ENCODE measurements at regions of chr13 and their contacts with region 1.

Region 1: DNA sequence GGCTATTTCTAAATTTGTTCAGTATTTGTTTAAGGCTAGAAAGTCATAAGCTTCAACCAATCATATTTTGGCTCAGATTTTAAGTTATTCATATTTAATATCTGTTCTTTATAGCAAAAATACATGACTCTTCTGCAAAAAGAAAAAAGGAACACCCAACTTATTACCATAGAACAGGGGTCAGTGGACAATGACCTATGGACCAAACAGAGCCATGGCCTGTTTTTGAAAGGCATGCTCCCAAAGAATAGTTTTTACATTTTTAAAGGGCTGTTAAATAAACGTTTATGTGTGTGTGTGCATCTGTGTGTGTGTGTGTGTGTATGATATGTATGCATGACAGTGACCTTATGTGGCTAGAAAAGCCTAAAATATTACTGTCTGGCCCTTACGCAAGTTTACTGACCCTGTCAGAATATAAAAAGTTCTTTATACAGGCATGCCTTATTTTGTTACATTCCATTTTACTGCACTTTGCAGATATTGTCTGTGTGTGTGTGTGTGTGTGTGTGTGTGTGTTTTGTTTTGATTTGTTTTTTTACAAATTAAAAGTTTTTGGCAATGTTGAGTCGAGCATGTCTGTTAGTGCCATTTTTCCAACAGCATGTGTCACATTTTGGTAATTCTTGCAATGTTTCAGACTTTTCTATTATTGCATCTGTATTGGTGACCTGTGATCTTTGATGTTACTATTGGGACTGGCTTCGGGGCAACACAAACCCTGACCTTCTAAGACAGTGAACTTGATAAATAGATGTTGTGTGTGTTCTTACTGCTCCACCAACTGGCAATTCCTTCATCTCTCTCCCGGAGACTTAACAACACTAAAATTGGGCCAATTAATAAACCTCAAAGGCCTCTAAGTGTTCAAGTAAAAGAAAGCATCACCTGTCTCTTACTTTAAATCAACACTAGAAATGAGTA is 22.0 kb downstream of the KLF12 start:
- DNase-seq: no peak
- ATAC-seq: no peak
- H3K4me3 ChIP-seq: peak overlapping the region in 1 of 2 donors; percentile 26
- H3K27ac ChIP-seq: peak overlapping the region; percentile 77 to 87
- H3K4me1 ChIP-seq: peaks cover 0 to 15% of the 10 kb centered on the region in 2 donors
- H3K27me3 ChIP-seq: no peaks in the 10 kb centered on the region

Region 2: DNA sequence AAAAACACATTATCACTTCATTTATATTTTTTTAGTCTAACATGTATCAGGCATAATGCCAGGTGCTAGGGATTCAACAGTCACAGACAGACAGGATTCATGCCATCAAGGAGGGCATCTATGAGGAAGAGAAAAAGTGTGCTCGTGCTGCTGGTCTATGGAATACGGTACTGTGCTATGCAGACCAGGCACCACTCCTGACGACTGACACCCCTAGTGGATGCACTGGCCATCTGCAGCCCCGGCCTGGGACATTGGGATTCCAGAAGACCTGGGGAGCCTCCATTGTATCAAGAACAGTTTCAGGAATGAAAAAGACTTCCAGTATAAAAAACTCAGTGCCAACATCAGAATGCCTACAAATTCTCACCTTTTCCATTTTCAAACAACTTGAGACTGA is 72.0 kb before region 1 on chr13:
- intact Hi-C with region 1: no loop called
- DNase-seq: no peak
- ATAC-seq: no peak
- H3K4me3 ChIP-seq: no peak overlapping the region
- H3K27ac ChIP-seq: no peak overlapping the region
- H3K4me1 ChIP-seq: peaks cover 0 to 2% of the 10 kb centered on the region in 2 donors
- H3K27me3 ChIP-seq: no peaks in the 10 kb centered on the region

Region 3: GRCh38 chr13:74062933-74063332 is 49.2 kb before region 1 on chr13:
- intact Hi-C with region 1: loop called in 1 of 2 experiments (anchors 2 kb)
- DNase-seq: peak; percentile 80 to 85
- ATAC-seq: peak; percentile 88
- H3K4me3 ChIP-seq: peak overlapping the region; percentile 42 to 72
- H3K27ac ChIP-seq: peak overlapping the region; percentile 67 to 95
- H3K4me1 ChIP-seq: peaks cover 2 to 14% of the 10 kb centered on the region in 2 donors
- H3K27me3 ChIP-seq: no peaks in the 10 kb centered on the region

Region 4: GRCh38 chr13:74168263-74168675 is 56.1 kb after region 1 on chr13:
- intact Hi-C with region 1: no loop called
- DNase-seq: no peak
- ATAC-seq: peak; percentile 38
- H3K4me3 ChIP-seq: no peak overlapping the region
- H3K27ac ChIP-seq: no peak overlapping the region
- H3K4me1 ChIP-seq: peaks cover 0 to 1% of the 10 kb centered on the region in 2 donors
- H3K27me3 ChIP-seq: no peaks in the 10 kb centered on the region